Activated CD4-positive, alpha-beta T cell treated with anti-CD3 and anti-CD28 coated beads for 36 hours (primary cell): ENCODE measurements at regions of chr5 and their contacts with region 1.

Region 1: DNA sequence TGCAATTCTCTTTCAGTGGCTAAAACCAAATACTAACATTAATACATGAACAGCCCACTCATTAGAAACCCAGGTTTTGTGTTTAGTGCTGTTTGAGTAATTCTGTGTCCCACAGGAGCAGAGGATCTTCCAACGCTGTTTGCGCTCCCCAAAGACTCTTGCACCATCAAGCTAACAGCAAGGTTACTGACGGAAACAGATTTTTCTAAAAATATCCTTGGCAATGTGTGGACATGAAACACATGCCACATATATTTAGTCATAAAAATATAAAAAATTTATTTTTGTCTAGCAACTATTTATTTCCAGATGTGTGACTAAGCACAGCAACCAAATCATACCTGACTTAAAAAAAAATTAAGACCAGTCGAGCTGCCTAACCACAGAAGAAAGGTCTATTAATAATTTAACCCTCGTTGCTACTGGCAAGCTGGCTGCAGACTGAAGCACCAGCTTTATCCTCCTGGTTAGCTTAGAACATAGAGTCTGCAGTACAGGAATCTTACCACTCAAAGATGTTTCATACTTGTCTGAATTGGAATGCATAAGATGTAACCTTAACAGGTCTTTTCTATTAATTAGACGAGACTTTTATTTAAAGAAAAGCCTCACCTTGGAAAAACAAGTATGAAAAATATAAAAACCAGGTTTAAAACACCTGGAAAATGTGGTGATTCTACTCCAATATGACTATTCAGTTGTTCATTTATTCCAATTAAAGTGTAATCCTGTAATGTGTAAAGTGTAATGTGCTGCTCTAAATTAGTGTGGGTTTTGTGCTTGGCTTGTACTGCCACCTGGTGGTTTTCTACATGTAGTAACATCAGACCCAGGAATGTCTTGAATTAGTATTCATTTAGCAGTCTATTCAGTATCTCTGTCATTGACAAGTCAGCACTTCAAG is 272.5 kb downstream of the EPB41L4A start:
- DNase-seq: peak; percentile 73
- ATAC-seq: peak; percentile 96
- H3K4me3 Mint-ChIP-seq: no peak overlapping the region
- H3K27ac Mint-ChIP-seq: no peak overlapping the region
- H3K4me1 Mint-ChIP-seq: no peaks in the 10 kb centered on the region
- H3K27me3 Mint-ChIP-seq: peaks cover 4% of the 10 kb centered on the region

Region 2: DNA sequence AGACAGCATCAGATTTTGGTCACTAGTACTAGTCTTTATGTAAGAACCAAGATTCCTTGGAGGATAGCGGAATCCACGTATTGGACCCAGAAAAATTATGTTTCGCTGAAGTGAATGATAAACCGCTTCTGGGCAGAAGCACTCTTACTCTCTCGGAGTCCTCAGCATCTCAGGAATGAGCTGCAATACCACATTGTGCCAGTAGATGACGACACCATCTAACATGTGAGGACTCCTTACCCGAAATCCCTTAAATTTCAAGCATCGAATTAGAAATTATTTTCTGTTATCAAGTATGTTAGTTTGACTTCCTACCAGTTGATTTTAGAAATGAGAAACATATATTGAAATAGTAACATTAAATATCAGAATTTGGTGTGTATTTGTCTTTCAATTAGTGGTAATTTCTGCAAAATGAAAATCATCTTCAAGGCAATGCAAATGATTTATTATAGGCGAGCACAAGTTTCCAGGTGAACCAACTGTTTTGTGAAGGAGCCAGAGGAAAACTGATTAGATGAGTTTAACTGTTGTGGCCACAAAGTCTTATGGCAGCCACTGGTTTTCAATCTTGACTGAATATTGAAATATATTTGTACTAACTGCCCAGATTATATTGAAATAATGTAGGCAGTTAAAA is 988.4 kb before region 1 on chr5:
- CTCF ChIA-PET with region 1: no interaction called
- POLR2A ChIA-PET with region 1: no interaction called
- intact Hi-C with region 1: loop called (anchors 2 kb)
- DNase-seq: peak; percentile 88
- ATAC-seq: peak; percentile 67
- H3K4me3 Mint-ChIP-seq: no peak overlapping the region
- H3K27ac Mint-ChIP-seq: no peak overlapping the region
- H3K4me1 Mint-ChIP-seq: peaks cover 11% of the 10 kb centered on the region
- H3K27me3 Mint-ChIP-seq: no peaks in the 10 kb centered on the region

Region 3: DNA sequence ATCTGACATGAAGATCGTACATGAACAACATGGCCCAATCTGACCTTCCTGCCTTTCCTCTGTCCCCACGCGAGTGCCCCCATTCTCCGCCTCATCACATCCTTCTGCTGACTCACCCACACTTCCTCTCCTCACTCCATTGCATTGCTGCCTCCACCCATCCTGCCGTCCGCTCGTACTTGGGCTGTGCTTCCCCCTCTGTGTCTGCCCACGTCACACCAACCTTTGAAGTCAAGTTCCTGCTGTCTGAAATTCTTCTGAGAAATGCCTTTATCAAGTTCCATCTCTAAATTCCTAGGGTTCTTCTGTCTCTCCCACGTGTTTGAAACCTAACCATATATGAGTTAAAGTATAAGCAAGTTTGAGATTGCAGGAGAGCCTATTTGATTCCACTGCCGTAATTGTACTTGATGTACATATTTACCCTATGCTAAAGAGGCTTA is 616.3 kb before region 1 on chr5:
- CTCF ChIA-PET with region 1: interaction called, 8 read pairs
- POLR2A ChIA-PET with region 1: no interaction called
- intact Hi-C with region 1: loop called in 1 of 2 experiments (anchors 1 kb)
- DNase-seq: peak; percentile 87
- ATAC-seq: peak; percentile 100
- H3K4me3 Mint-ChIP-seq: peak overlapping the region; percentile 50
- H3K27ac Mint-ChIP-seq: peak overlapping the region; percentile 84
- H3K4me1 Mint-ChIP-seq: peaks cover 19% of the 10 kb centered on the region
- H3K27me3 Mint-ChIP-seq: no peaks in the 10 kb centered on the region

Region 4: DNA sequence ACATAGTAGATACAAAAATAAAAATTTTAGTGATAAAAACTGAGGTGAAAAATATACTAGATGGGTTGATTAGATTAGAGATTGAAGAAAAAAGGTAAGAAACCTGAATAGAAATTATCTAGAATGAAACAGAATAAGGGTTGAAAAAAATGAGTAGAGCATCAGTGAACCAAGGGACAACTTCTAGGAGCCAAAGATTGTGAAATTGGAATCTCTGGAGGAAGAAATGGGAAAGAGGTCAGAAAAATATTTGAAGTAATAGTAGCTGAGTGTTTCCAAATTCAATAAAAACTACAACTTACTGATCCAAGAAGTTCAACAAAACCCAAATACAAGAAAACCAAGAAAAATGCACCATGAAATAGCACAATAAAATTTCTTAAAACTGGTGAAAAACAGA is 517.7 kb before region 1 on chr5:
- CTCF ChIA-PET with region 1: no interaction called
- POLR2A ChIA-PET with region 1: no interaction called
- intact Hi-C with region 1: loop called in 1 of 2 experiments (anchors 5 kb)
- DNase-seq: no peak
- ATAC-seq: no peak
- H3K4me3 Mint-ChIP-seq: no peak overlapping the region
- H3K27ac Mint-ChIP-seq: no peak overlapping the region
- H3K4me1 Mint-ChIP-seq: peaks cover 17% of the 10 kb centered on the region
- H3K27me3 Mint-ChIP-seq: peaks cover 5% of the 10 kb centered on the region

Region 5: GRCh38 chr5:111834926-111835598 is 311.5 kb before region 1 on chr5:
- CTCF ChIA-PET with region 1: no interaction called
- POLR2A ChIA-PET with region 1: no interaction called
- intact Hi-C with region 1: loop called in 1 of 2 experiments (anchors 5 kb)
- DNase-seq: no peak
- ATAC-seq: no peak
- H3K4me3 Mint-ChIP-seq: no peak overlapping the region
- H3K27ac Mint-ChIP-seq: no peak overlapping the region
- H3K4me1 Mint-ChIP-seq: no peaks in the 10 kb centered on the region
- H3K27me3 Mint-ChIP-seq: no peaks in the 10 kb centered on the region

Region 6: GRCh38 chr5:112239996-112240395 is 93.4 kb after region 1 on chr5:
- CTCF ChIA-PET with region 1: no interaction called
- POLR2A ChIA-PET with region 1: no interaction called
- intact Hi-C with region 1: no loop called
- DNase-seq: no peak
- ATAC-seq: no peak
- H3K4me3 Mint-ChIP-seq: no peak overlapping the region
- H3K27ac Mint-ChIP-seq: no peak overlapping the region
- H3K4me1 Mint-ChIP-seq: no peaks in the 10 kb centered on the region
- H3K27me3 Mint-ChIP-seq: peaks cover 19% of the 10 kb centered on the region